ENCODE measurements at regions of chr9 and their contacts with region 1.

Region 1: GRCh38 chr9:127877566-127877998 is at the start of gene AK1:
- DNase-seq: no peak
- H3K4me3 ChIP-seq: peak within 1 kb of the TSS; percentile 70
- H3K27ac ChIP-seq: peak within 1 kb of the TSS; percentile 11
- H3K27me3 ChIP-seq: no peaks in the 10 kb centered on the region
- CTCF ChIP-seq: no peak
- polyA plus RNA-seq, gene AK1: 75.9 and 93.9 TPM in 2 replicates

Region 2: DNA sequence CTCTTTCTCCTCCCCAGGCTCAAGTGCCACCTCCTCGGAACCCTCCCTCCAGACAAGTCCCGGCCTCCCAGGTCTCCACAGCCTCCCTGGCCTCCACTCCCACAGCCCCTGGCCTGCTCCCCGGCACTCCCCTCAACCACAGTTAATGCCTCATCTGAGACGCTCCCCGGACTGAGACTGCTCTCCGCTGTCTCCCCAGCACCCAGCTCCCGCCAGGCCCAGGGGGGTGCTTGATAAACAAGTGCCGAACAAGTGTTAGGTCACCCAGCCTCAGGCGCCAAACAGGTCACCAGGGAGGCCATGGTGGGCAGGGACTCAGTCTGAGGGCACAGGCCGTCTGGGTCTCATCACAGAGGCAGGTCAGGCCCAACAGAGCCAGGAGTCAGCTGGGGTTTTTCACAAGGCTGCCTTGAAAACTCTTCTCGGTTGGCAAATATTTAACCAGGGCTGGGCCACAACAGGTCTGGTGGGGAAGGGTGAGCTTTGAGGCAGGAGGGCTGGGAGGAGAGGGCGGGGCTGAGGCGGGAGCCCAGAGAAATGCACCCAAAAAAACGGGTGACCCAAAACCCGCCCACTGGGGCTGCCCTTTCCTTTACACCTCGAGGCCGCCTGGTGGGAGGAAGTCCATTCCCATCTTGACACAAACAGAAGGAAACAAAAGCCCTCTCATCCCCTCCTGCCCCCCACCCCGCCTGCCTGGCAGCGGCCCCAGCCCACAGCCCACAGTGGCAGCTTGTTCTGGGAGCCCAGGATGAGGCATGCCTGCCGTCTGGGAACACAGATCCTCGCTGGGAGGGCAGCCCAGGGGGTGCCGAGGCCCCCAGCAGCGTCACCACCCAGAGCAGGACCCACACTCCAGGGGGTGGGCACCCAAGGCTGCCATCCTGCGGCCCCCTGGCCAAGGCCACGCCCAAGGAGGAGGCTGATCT is 332.1 kb before region 1 on chr9:
- CTCF ChIA-PET with region 1: no interaction called
- POLR2A ChIA-PET with region 1: no interaction called
- DNase-seq: no peak
- H3K4me3 ChIP-seq: no peak overlapping the region
- H3K27ac ChIP-seq: peak overlapping the region; percentile 73
- H3K27me3 ChIP-seq: no peaks in the 10 kb centered on the region
- CTCF ChIP-seq: no peak

Region 3: GRCh38 chr9:127838375-127839078 is 39.1 kb before region 1 on chr9:
- CTCF ChIA-PET with region 1: no interaction called
- POLR2A ChIA-PET with region 1: no interaction called
- DNase-seq: peak; percentile 65
- H3K4me3 ChIP-seq: peak overlapping the region; percentile 20
- H3K27ac ChIP-seq: peak overlapping the region; percentile 92
- H3K27me3 ChIP-seq: no peaks in the 10 kb centered on the region
- CTCF ChIP-seq: no peak

Region 4: DNA sequence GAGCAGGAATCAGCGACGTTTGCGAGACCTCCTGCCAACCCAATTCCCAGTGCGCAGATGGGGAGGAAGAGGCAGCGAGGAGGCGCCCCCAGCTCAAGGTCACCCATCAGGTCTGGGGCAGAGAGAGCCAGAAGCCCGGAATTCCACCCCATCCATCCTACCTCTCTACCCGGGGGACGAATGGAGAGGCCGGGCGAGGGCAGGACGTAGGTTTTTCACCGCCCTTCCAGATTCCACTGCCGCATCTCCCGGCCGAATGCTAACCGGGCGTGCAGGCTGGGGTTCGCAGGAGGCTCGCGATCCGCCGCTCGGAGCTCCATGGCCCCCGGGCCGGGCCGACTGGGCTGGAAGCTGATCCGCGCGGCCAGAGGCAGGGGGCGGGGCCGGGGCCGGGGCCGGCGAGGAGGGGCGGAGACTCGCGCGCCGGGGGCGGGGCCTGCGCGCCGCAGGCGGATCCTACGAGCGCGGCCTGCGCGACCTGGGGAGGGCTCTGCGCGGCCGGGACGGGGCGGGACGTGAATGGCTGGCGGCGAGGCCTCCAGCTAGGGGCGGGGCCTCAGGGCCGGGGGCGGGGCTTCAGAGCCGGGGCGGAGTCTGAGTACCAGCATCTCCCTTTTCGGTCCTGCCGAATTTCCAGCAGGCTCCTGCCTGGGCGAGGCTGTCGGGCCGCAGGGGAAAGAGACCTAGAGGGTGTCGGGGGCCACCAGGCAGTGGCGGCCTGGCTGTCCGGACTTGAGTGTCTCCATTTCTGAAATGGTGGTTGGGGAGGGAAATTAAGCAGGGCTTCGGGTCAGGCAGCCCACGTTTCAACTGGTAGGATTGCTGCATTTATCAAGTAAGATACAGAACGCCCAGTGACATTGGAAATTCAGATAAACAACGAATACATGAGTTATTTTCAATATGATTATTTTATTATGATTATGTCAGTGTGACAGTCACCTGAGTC is 39.4 kb after region 1 on chr9 and contains the start of gene ST6GALNAC4:
- CTCF ChIA-PET with region 1: interaction called, 11 read pairs
- POLR2A ChIA-PET with region 1: interaction called, 3 read pairs
- DNase-seq: peak; percentile 70
- H3K4me3 ChIP-seq: peak within 1 kb of the TSS; percentile 80
- H3K27ac ChIP-seq: peak within 1 kb of the TSS; percentile 21
- H3K27me3 ChIP-seq: no peaks in the 10 kb centered on the region
- CTCF ChIP-seq: no peak
- polyA plus RNA-seq, gene ST6GALNAC4: 15.0 and 24.3 TPM in 2 replicates